IMR-90 (cell line): ENCODE measurements at regions of chr10 and their contacts with region 1.

Region 1: DNA sequence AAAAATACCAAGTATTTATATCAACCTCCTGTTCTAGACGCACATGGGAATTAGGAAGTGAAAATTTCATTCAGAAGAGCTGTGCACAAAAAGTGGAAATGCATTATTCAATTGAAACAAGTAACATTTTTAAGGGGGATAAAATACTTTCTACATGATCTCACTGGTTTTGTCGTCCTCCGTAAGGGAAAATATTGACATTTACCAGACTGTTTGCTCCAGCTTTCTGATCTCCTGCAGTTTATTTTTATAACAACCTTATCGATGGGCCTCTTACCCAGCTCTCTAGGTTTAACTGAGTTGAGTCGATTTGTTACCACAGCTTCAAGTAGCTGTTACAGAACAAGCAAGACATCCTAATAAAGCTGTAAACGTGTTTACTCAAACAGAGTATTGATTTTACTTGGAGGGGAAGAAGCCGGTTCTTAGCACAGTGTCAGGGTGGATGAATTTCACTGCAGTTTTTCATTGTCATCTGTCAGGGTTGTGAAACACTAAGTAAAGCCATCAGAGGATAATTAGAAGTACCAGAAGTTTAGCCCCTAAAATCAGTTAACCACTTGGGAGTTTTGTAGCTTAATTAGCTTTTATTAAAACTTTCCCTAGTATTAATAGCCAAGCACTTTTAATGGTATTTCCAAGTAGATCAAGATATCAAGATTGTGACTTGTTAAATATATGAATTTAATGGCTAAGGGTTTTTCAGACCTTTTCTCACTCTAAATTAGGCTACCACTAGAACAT is 142.6 kb upstream of the KAT6B start:
- DNase-seq: peak; percentile 10
- ATAC-seq: no peak; the same call in 1 of the 2 replicates
- H3K4me3 ChIP-seq: no peak overlapping the region
- H3K27ac ChIP-seq: no peak overlapping the region
- H3K4me1 ChIP-seq: peaks cover 3% of the 10 kb centered on the region; the same call in 1 of the 2 replicates
- H3K27me3 ChIP-seq: no peaks in the 10 kb centered on the region
- CTCF ChIP-seq: no peak
- POLR2A ChIP-seq: no peak
- RAD21 ChIP-seq: no peak

Region 2: DNA sequence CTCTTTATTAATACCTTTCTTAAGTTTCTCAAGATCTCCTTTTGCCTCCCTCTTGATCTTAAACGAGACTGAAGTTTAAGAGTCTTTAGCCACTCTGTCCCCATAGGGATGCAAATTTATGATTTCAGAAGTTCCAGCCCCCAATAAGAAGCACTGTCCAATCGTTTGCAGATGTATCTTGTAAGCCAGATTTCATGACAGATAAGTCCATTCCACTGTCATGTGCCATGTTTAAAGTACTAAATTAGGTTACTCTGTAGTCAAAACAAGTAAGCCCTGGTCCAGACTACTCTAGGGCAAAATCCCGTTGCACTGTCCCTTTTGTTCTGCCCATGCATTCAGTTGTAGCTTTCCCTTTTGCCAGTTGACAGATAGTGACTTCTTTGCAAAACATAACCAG is 14.6 kb before region 1 on chr10:
- CTCF ChIA-PET with region 1: interaction called, 6 read pairs
- POLR2A ChIA-PET with region 1: interaction called, 18 read pairs
- dilution Hi-C with region 1: no loop called
- in situ Hi-C with region 1: no loop called
- intact Hi-C with region 1: no loop called
- DNase-seq: no peak
- ATAC-seq: no peak
- H3K4me3 ChIP-seq: no peak overlapping the region
- H3K27ac ChIP-seq: no peak overlapping the region
- H3K4me1 ChIP-seq: no peaks in the 10 kb centered on the region
- H3K27me3 ChIP-seq: no peaks in the 10 kb centered on the region
- CTCF ChIP-seq: no peak
- POLR2A ChIP-seq: no peak
- RAD21 ChIP-seq: no peak

Region 3: DNA sequence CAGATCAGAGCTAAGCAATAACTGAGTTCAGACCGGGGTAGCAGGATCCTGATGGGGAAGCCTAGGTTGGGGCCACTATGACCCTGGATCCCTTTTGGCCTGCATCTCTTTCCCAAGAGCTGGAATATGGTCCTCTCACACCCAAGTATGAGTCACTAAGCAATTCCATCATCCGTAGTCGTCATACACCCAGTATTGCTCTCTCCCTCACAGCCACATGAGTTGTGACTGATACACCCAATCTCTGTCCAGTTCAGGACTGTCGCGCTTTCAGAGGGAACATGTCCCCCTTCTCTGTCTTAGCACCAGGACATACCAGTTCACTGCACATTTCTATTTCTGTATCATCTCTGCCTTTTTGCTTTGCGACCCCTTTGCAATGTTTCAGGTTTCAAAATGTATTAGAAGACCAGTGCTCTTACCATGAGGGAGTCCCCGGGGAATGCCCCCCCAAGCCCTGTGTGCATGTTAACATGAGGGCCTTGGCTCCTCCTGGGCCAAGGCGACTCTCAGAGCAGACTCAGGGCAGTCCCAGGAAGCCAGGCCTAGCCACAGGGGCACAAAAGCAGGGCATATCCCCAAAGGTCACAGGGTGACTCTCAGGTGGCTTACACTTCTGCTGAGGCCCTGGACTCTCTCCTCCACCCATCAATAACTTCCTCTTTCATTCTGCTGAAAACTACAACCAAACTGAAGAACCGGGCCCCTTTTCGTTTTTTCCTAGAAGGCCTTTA is 352.3 kb after region 1 on chr10:
- CTCF ChIA-PET with region 1: no interaction called
- POLR2A ChIA-PET with region 1: no interaction called
- dilution Hi-C with region 1: no loop called
- in situ Hi-C with region 1: no loop called
- intact Hi-C with region 1: no loop called
- DNase-seq: peak; percentile 68
- ATAC-seq: peak; percentile 37
- H3K4me3 ChIP-seq: no peak overlapping the region
- H3K27ac ChIP-seq: no peak overlapping the region
- H3K4me1 ChIP-seq: peaks cover 8% of the 10 kb centered on the region
- H3K27me3 ChIP-seq: no peaks in the 10 kb centered on the region
- CTCF ChIP-seq: no peak
- POLR2A ChIP-seq: no peak
- RAD21 ChIP-seq: no peak